A673 (cell line): ENCODE measurements at regions of chr6 and their contacts with region 1.

Region 1: DNA sequence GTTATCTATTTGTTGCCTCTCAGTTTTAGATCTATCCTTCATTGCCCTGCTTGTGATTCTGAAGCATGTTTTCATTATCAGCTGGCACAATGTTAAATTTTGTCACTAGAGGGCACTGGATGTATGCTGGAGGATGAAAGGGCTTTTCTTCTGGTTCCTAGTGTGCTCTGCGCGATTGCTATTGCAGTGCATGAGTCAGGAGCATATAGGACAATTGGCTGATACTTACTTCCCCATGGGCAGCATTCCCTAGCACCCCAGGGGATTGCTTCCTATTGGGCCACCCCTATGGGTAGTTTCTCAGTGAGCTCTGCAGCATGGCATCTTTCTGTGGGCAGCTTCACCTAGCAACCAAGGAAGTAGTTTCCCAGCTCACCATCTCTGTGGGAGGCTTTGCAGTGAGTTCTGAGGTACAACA is 280.3 kb upstream of the SYNCRIP start:
- DNase-seq: peak; percentile 67
- H3K4me3 ChIP-seq: no peak overlapping the region
- H3K27ac ChIP-seq: no peak overlapping the region
- H3K4me1 ChIP-seq: no peaks in the 10 kb centered on the region
- H3K27me3 ChIP-seq: no peaks in the 10 kb centered on the region
- CTCF ChIP-seq: peak; percentile 74

Region 2: GRCh38 chr6:86192123-86192522 is 269.1 kb after region 1 on chr6:
- CTCF ChIA-PET with region 1: no interaction called
- POLR2A ChIA-PET with region 1: no interaction called
- intact Hi-C with region 1: loop called (anchors 5 kb)
- DNase-seq: peak; percentile 59
- H3K4me3 ChIP-seq: no peak overlapping the region
- H3K27ac ChIP-seq: no peak overlapping the region
- H3K4me1 ChIP-seq: no peaks in the 10 kb centered on the region
- H3K27me3 ChIP-seq: no peaks in the 10 kb centered on the region
- CTCF ChIP-seq: peak; percentile 55

Region 3: GRCh38 chr6:86856937-86857563 is 934.0 kb after region 1 on chr6:
- CTCF ChIA-PET with region 1: no interaction called
- POLR2A ChIA-PET with region 1: no interaction called
- intact Hi-C with region 1: loop called (anchors 2 kb)
- DNase-seq: peak; percentile 60
- H3K4me3 ChIP-seq: no peak overlapping the region
- H3K27ac ChIP-seq: no peak overlapping the region
- H3K4me1 ChIP-seq: no peaks in the 10 kb centered on the region
- H3K27me3 ChIP-seq: no peaks in the 10 kb centered on the region
- CTCF ChIP-seq: peak; percentile 85

Region 4: DNA sequence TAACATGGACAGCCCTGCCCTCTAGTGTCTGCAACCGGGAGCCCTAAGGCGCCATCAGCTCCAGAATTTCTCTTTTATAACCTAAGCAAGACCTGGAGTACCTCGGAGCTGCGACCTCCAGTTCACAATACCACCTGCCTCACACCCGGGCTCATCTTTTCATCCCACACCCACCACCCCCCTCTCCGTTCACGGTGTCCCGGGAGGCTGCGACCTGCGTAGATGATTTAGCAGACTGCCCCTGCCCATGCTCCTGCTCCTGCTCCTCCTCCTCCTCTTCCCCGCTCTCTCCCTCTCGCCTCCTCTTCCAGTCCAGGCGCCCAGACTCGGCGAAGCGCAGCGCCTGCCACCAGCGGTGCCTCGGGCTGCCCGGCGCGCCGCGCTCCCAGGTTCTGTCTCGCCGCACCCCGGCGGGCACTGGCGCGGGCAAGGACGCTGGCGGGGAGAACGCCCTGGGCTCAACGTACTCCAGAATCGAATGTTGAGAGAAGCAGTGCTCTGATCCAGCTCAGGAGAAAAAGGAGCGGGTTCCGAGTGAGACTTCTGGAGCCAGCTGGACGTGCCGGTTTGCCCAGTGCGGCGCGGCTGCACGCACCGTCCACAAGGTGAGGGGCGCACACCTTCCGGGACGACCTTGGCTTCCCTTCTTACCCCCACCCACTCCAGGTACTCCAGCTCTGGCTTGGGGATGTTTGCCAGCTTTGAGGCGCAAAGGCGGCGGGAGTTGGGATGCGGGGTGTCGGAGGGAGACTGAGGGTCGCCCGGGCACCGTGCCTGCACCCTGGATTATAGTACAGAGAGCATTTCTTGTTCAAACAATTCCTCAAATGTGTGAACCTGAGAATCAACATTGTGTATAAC is 1014.4 kb after region 1 on chr6 and contains the start of gene HTR1E:
- CTCF ChIA-PET with region 1: no interaction called
- POLR2A ChIA-PET with region 1: no interaction called
- intact Hi-C with region 1: loop called (anchors 2 kb)
- DNase-seq: peak; percentile 56
- H3K4me3 ChIP-seq: peak within 1 kb of the TSS; percentile 23
- H3K27ac ChIP-seq: no peak within 1 kb of the TSS
- H3K4me1 ChIP-seq: no peaks in the 10 kb centered on the region
- H3K27me3 ChIP-seq: peaks cover 77% of the 10 kb centered on the region
- CTCF ChIP-seq: peak; percentile 69
- total RNA-seq, gene HTR1E: not detected in 2 replicates

Region 5: GRCh38 chr6:87029711-87030314 is 1106.8 kb after region 1 on chr6:
- CTCF ChIA-PET with region 1: no interaction called
- POLR2A ChIA-PET with region 1: no interaction called
- intact Hi-C with region 1: loop called (anchors 10 kb)
- DNase-seq: peak; percentile 55
- H3K4me3 ChIP-seq: no peak overlapping the region
- H3K27ac ChIP-seq: no peak overlapping the region
- H3K4me1 ChIP-seq: no peaks in the 10 kb centered on the region
- H3K27me3 ChIP-seq: peaks cover 5% of the 10 kb centered on the region
- CTCF ChIP-seq: peak; percentile 74